ENCODE measurements at regions of chr11 and their contacts with region 1.

Region 1: DNA sequence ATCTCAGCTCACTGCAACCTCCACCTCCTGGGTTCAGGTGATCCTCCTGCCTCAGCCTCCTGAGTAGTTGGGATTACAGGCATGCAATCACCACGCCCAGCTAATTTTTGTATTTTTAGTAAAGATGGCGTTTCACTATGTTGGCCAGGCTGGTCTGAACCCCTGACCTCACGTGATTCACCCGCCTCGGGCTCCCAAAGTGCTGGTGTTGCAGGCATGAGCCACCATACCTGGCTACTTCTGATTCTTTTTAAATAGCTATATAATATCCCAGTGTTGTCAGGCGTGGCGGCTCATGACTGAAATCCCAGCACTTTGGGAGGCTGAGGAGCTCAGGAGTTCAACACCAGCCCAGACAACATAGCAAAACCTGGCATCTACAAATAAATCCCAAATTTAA is 20.7 kb downstream of the TMEM41B start:
- DNase-seq: no peak
- ATAC-seq: no peak
- H3K4me3 ChIP-seq: no peak overlapping the region
- H3K27ac ChIP-seq: no peak overlapping the region
- H3K4me1 ChIP-seq: no peaks in the 10 kb centered on the region
- H3K27me3 ChIP-seq: no peaks in the 10 kb centered on the region
- CTCF ChIP-seq: no peak
- POLR2A ChIP-seq: no peak
- RAD21 ChIP-seq: no peak

Region 2: DNA sequence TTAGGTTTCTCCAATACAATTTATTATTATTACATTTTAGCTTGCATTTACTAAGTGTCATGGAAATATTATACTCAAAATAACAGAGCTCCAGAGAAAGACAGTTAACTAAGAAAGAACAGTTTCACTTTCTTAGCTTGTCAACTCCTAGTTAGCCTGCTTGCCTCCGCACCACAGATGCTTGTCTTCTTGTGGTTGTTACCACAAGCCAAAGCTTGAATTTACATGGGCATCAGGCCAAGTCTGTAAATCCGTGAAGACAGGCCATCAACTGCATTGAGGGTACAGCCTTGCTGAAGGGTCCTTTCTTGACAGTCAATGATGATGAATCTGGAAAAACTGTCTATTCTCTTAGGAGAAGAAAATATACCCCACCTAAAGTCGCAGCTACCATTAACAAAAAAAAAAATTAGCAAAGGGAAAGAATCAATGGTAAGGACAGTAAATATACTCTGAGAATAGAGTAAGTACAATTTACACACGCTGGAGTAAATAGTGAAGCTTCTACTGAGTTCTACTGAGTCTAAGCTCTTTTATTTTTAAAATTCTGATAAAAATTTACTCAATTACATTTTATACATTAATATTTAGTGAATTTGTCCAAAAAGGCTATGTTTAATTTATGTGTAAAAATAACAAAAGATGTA is 12.9 kb before region 1 on chr11:
- CTCF ChIA-PET with region 1: no interaction called
- POLR2A ChIA-PET with region 1: interaction called, 11 read pairs
- dilution Hi-C with region 1: no loop called
- in situ Hi-C with region 1: no loop called
- intact Hi-C with region 1: no loop called
- DNase-seq: peak; percentile 81
- ATAC-seq: peak; percentile 63
- H3K4me3 ChIP-seq: no peak overlapping the region
- H3K27ac ChIP-seq: no peak overlapping the region
- H3K4me1 ChIP-seq: no peaks in the 10 kb centered on the region
- H3K27me3 ChIP-seq: no peaks in the 10 kb centered on the region
- CTCF ChIP-seq: no peak
- POLR2A ChIP-seq: no peak
- RAD21 ChIP-seq: no peak